Mammary epithelial cell (primary cell): ENCODE measurements at regions of chr6 and their contacts with region 1.

Region 1: DNA sequence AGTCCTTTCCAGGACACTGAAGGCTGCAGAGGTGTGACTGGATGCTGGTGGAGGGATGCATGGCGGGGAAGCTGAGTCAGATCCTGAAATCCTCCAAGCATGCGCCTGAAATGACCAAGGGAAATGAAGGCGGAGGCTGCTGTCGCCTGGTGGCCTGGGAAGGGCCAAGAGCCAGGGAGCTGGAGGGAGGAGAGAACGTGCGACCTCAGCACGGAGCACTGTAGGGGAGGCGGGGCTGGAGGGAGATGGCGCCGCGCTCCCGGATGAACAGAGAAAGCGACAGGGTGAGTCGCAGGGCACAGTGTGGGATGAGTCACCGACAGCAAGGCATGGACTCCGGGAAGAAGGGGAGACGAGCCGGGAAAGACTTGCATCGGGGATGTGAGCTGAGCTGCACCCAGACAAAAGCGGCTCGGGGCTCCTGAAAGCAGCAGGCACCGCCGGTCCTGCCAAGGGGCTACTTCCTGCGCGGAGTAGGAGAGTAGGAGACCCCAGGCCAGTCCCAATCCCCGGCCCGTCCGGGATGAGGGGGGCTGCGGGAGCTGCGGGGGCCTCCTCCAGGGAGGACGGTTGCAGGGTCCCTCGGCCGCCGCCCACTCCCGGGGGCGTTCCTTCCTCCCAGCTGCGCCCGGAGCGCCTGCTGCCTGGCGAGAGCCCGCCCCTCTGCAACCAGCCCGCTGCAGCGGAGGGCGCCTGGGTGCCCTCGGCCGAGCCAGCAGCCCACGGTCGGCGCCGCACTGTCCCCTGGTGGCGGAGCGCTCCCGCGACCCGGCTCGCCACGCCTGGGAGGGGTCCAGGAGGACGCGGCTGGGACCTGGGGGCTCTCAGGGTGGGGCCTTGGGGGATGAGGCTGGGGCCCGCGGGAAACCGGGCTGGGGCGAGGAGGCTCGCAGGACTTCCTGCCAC is 11.0 kb upstream of the NQO2 start:
- DNase-seq: peak; percentile 92
- H3K4me3 ChIP-seq: peak overlapping the region; percentile 63 to 83 (median 69)
- H3K27ac ChIP-seq: peak overlapping the region; percentile 99
- H3K4me1 ChIP-seq: peaks cover 32% of the 10 kb centered on the region
- H3K27me3 ChIP-seq: no peaks in the 10 kb centered on the region
- CTCF ChIP-seq: peak; percentile 50 to 89

Region 2: DNA sequence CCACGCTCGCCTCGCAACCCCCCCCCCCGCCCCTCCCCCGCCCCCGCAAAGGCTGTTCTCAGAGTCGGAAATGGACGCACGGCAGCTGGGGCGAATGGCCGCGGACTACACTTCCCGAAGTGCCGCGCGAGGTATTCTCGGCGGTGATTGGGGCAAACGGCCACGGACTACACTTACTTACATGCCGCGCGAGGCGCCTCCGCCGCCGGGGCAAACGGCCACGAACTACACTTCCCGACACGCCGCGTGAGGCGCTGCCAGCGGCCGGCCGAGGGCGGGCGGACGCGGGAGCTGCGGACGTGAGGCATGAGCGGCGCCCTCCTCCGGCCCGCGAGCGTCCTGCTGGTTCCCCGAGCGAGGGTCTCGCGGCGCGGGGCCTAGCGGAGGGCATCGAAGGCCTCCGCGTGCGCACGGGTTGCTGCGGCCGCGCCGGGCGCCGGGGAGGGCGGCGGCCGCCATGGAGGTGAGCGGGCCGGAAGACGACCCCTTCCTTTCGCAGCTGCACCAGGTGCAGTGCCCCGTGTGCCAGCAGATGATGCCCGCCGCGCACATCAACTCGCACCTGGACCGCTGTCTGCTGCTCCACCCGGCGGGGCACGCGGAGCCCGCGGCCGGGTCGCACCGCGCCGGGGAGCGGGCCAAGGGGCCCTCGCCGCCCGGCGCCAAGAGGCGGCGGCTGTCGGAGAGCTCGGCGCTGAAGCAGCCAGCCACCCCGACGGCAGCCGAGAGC is 223.3 kb before region 1 on chr6 and contains the start of gene WRNIP1:
- CTCF ChIA-PET with region 1: no interaction called
- dilution Hi-C with region 1: no loop called
- in situ Hi-C with region 1: no loop called
- intact Hi-C with region 1: loop called (anchors 1 kb)
- DNase-seq: peak; percentile 99
- H3K4me3 ChIP-seq: peak within 1 kb of the TSS; percentile 68 to 88 (median 82)
- H3K27ac ChIP-seq: peak within 1 kb of the TSS; percentile 94
- H3K4me1 ChIP-seq: peaks cover 32% of the 10 kb centered on the region
- H3K27me3 ChIP-seq: no peaks in the 10 kb centered on the region
- CTCF ChIP-seq: peak; percentile 33 to 53
- total RNA-seq, gene WRNIP1: 43.3 to 46.0 TPM

Region 3: DNA sequence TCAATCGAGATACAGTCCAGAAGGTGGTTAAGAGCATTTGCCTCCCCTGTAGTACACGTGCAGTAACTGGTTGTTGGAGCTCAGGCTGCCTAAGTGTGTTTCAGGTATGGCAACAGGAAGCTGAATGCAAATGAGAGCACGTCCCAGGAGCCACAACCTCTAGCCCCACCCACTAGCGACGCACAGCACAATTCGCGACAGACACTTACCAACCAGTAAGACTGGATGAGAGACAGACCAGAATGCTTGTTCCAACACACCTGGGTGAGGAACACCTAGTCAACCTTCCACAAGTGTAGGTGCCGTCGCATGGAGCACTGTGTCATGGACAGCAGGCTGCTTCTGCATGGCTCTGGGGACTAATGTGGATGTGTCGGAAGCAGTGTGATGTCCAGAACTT is 139.8 kb before region 1 on chr6:
- CTCF ChIA-PET with region 1: no interaction called
- dilution Hi-C with region 1: loop called (anchors 5 kb)
- in situ Hi-C with region 1: no loop called
- intact Hi-C with region 1: loop called (anchors 1 kb)
- DNase-seq: no peak
- H3K4me3 ChIP-seq: no peak overlapping the region
- H3K27ac ChIP-seq: no peak overlapping the region
- H3K4me1 ChIP-seq: peaks cover 11% of the 10 kb centered on the region
- H3K27me3 ChIP-seq: no peaks in the 10 kb centered on the region
- CTCF ChIP-seq: no peak

Region 4: GRCh38 chr6:2952557-2953095 is 36.1 kb before region 1 on chr6:
- CTCF ChIA-PET with region 1: interaction called, 17 read pairs
- dilution Hi-C with region 1: loop called (anchors 5 kb)
- in situ Hi-C with region 1: no loop called
- intact Hi-C with region 1: loop called (anchors 1 kb)
- DNase-seq: peak; percentile 59
- H3K4me3 ChIP-seq: no peak overlapping the region
- H3K27ac ChIP-seq: no peak overlapping the region
- H3K4me1 ChIP-seq: no peaks in the 10 kb centered on the region
- H3K27me3 ChIP-seq: no peaks in the 10 kb centered on the region
- CTCF ChIP-seq: peak; percentile 79 to 93

Region 5: DNA sequence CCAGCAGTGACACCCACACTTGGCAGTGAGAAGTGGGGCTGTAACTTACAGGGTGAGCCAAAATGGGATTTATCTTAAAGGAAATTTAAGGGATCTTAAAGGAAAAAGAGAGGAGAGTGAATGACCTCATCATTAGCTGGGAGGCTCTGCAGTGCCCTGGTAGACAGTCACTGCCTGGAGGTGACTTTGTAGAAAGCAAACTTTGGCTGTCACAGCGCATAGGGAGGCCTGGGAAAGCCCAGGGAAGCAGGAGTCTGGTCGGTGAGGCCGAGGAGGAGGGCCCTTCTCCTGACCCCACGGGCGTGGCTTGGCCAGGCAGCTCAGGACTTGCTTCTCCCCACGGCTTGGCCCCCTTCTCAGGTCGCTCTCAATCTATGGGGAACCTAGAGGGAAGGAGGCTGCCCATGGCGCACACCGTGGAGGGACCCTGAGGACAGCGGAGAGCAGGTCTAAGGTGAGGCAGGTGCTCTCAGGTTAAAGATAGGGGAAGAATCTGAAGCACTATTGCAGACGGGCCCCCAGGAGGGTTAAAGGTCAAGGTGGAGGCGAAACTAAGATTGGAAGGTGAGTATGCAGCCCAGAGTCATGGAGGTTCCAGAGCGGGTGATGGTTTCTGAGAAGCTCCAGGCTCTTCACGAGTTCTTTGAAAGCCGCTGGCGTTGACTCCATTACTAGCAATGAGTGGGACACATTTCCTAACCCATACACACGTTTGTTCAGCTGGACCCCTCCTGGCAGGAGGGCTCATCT is 64.0 kb after region 1 on chr6:
- CTCF ChIA-PET with region 1: no interaction called
- dilution Hi-C with region 1: no loop called
- in situ Hi-C with region 1: loop called (anchors 5 to 10 kb)
- intact Hi-C with region 1: no loop called
- DNase-seq: no peak
- H3K4me3 ChIP-seq: no peak overlapping the region
- H3K27ac ChIP-seq: no peak overlapping the region
- H3K4me1 ChIP-seq: no peaks in the 10 kb centered on the region
- H3K27me3 ChIP-seq: no peaks in the 10 kb centered on the region
- CTCF ChIP-seq: no peak